HCT116 (cell line): ENCODE measurements at regions of chr11 and their contacts with region 1.

Region 1: DNA sequence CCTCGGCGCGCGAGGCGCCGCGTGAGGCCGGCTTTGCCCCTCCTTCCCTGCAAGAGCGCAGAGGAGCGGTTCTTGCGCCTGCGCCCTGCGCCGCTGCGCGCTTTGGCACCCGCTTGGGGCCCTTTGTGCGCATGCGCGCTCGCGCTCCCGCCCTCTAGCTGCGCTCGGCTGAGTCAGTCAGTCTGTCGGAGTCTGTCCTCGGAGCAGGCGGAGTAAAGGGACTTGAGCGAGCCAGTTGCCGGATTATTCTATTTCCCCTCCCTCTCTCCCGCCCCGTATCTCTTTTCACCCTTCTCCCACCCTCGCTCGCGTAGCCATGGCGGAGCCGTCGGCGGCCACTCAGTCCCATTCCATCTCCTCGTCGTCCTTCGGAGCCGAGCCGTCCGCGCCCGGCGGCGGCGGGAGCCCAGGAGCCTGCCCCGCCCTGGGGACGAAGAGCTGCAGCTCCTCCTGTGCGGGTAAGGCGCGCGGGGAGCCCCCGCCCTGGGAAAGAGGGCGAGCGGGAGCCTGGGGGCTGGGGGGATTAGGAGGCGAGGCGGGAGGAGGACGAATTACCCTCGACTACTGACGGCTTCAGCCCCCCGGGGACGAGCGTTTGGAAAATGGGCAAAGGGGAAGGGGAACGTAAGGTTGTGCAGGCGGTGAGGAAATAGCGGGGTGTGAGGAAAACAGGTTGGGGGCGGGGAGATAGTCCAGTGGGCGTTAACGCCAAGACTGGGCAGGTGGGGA is at the start of gene RTN3:
- DNase-seq: peak; percentile 96
- ATAC-seq: peak; percentile 94
- H3K4me3 ChIP-seq: peak within 1 kb of the TSS; percentile 78 to 90
- H3K27ac ChIP-seq: peak within 1 kb of the TSS; percentile 95
- H3K4me1 ChIP-seq: peaks cover 13 to 20% of the 10 kb centered on the region in 2 experiments
- H3K27me3 ChIP-seq: no peaks in the 10 kb centered on the region
- CTCF ChIP-seq: no peak
- POLR2A ChIP-seq: peak; percentile 93
- RAD21 ChIP-seq: no peak
- total RNA-seq, gene RTN3: 95.0 TPM

Region 2: DNA sequence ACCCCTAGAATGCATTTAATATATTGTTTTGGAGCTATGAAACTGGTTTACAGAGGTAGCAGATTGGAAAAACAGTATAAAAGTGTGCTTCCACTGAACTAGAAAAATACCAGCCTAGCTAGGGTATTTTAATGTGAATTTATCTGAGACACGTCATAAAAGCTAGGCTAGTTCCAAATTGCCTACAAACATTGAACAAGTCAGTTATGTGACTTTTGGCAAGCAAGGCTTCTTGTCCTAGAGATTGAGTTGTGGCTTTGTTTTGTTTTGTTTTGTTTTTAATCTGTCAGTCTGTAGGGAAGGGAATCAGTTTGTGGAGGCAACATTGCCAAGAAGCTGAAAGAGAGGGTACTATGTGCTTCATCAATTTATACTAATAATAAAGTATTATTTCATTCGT is 24.0 kb after region 1 on chr11:
- CTCF ChIA-PET with region 1: no interaction called
- POLR2A ChIA-PET with region 1: interaction called, 4 read pairs
- RAD21 ChIA-PET with region 1: interaction called in 1 of 2 experiments, 10 read pairs
- intact Hi-C with region 1: no loop called
- DNase-seq: no peak
- ATAC-seq: no peak
- H3K4me3 ChIP-seq: no peak overlapping the region
- H3K27ac ChIP-seq: no peak overlapping the region
- H3K4me1 ChIP-seq: no peaks in the 10 kb centered on the region
- H3K27me3 ChIP-seq: no peaks in the 10 kb centered on the region
- CTCF ChIP-seq: no peak
- POLR2A ChIP-seq: no peak
- RAD21 ChIP-seq: no peak